ENCODE measurements at regions of chr5 and their contacts with region 1.

Region 1: GRCh38 chr5:11268891-11269290 is 507.9 kb upstream of the DAP start:
- DNase-seq: no peak
- H3K4me3 ChIP-seq: no peak overlapping the region
- H3K27ac ChIP-seq: no peak overlapping the region
- H3K4me1 ChIP-seq: no peaks in the 10 kb centered on the region
- H3K27me3 ChIP-seq: no peaks in the 10 kb centered on the region
- CTCF ChIP-seq: no peak
- POLR2A ChIP-seq: no peak

Region 2: DNA sequence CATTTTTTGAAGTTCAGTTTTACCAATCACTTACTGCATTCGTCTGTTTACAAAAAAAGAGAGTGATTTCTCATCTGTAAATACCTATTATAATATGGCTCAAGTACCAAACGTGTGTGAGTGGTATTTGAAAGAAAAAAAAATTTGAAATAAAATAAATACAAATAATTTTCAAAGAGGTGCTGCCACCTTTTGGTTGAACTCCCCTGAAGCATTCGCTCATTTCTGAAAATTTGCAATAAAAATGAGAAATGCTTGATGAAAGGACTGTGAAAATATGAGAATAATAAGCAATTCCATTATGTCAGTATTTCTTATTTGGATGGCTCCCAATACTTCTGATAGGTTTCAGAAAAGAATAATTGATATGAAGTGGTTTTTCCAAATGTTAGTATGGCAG is 225.4 kb after region 1 on chr5:
- intact Hi-C with region 1: loop called (anchors 10 kb)
- DNase-seq: no peak
- H3K4me3 ChIP-seq: no peak overlapping the region
- H3K27ac ChIP-seq: no peak overlapping the region
- H3K4me1 ChIP-seq: no peaks in the 10 kb centered on the region
- H3K27me3 ChIP-seq: no peaks in the 10 kb centered on the region
- CTCF ChIP-seq: peak in 5 of 11 experiments; percentile 18 to 33 (median 26)
- POLR2A ChIP-seq: no peak

Measured in spleen (tissue), 13 donors.